ENCODE measurements at regions of chrX and their contacts with region 1.

Region 1: GRCh38 chrX:5113128-5113527 is 1115.5 kb downstream of the NLGN4X start:
- DNase-seq: peak in 1 of 2 experiments; percentile 54
- H3K4me3 ChIP-seq: no peak overlapping the region
- H3K27ac ChIP-seq: no peak overlapping the region
- H3K4me1 ChIP-seq: no peaks in the 10 kb centered on the region
- H3K27me3 ChIP-seq: no peaks in the 10 kb centered on the region
- CTCF ChIP-seq: peak; percentile 79

Region 2: DNA sequence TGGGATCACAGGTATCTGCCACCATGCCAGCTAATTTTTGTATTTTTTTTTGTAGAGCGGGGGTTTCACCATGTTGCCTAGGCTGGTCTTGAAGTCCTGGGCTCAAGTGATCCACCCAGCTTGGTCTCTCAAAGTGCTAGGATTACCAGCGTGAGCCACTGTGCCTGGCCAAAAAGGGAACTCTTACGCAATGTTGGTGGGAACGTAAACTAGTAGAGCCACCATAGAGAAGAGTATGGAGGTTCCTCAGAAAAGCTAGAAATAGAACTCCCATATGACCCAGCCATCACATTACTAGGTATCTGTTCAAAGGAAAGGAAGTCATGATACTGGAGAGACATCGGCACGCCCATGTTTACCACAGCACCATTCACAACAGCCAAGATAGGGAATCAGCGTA is 1485.5 kb before region 1 on chrX:
- CTCF ChIA-PET with region 1: no interaction called
- POLR2A ChIA-PET with region 1: no interaction called
- intact Hi-C with region 1: no loop called
- DNase-seq: no peak
- H3K4me3 ChIP-seq: no peak overlapping the region
- H3K27ac ChIP-seq: no peak overlapping the region
- H3K4me1 ChIP-seq: no peaks in the 10 kb centered on the region
- H3K27me3 ChIP-seq: no peaks in the 10 kb centered on the region
- CTCF ChIP-seq: no peak

Region 3: DNA sequence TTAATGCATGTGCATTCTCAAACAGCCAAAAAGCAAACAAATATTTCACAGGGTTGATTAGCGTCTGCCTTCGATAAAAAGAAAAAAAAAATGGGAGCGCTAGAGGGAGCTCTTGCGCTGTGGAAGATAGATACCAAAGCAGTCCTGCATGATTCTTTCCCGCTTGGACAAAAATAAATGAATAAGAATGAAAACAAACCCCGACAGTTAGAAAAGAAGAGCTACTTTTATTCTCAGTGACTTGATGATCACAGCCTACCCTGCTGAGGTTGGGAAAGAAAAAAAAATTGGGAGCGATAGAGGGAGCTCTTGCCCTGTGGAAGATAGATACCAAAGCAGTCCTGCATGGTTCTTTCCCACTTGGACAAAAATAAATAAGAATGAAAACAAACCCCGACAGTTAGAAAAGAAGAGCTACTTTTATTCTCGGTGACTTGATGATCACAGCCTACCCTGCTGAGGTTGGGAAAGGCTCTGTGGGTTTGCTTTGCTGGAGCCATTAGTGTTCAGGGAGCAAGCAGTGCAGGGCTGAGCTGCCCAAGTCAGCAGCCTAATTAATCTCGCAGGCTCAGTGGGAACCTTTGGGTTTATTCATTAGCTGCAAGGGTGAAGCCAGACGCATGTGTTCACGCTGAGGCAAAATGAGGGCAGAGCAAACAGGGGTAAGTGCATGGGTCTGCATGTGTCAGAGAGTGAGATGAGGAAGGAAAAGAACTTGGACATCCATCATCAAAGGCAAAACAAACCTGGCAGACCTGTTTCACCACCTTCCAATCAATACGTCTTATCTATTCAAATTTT is 1150.4 kb before region 1 on chrX:
- CTCF ChIA-PET with region 1: no interaction called
- POLR2A ChIA-PET with region 1: no interaction called
- intact Hi-C with region 1: loop called (anchors 5 kb)
- DNase-seq: peak; percentile 5 to 36
- H3K4me3 ChIP-seq: peak overlapping the region; percentile 21; the same call in 1 of the 2 replicates
- H3K27ac ChIP-seq: no peak overlapping the region
- H3K4me1 ChIP-seq: peaks cover 12% of the 10 kb centered on the region
- H3K27me3 ChIP-seq: no peaks in the 10 kb centered on the region
- CTCF ChIP-seq: peak; percentile 86

Region 4: GRCh38 chrX:4268676-4269075 is 844.5 kb before region 1 on chrX:
- CTCF ChIA-PET with region 1: no interaction called
- POLR2A ChIA-PET with region 1: no interaction called
- intact Hi-C with region 1: loop called (anchors 2 kb)
- DNase-seq: no peak
- H3K4me3 ChIP-seq: no peak overlapping the region
- H3K27ac ChIP-seq: no peak overlapping the region
- H3K4me1 ChIP-seq: no peaks in the 10 kb centered on the region
- H3K27me3 ChIP-seq: no peaks in the 10 kb centered on the region
- CTCF ChIP-seq: peak; percentile 59

Region 5: DNA sequence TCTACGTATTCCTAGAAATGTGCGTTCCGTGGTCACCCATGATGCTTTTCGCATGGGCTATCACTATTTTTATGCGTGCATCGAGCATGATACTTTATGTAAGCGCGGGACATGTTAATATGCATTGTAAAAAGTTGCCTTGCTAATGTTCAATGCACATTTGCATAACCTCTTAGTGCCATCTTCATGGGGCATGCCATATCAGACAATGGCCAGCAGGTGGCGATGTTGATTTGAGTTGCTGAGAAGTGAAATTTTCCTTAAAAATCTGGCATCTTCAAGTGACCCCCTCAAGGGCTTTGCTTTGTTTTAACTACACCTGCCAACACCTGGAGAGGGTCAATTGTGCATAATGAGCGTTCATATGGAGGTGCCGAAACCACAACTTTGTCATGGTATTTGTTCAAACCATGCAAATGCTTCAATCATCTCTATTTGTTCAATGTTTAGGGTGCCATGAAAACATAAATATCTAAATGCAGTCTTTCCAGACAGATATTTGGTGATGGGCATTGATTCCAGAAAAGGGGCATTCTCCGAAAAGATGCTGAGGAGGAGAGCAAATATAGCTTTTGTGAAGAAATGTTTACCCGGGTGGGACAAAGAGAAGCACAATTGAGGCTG is 565.8 kb before region 1 on chrX:
- CTCF ChIA-PET with region 1: no interaction called
- POLR2A ChIA-PET with region 1: no interaction called
- intact Hi-C with region 1: loop called (anchors 2 kb)
- DNase-seq: peak in 1 of 2 experiments; percentile 35
- H3K4me3 ChIP-seq: no peak overlapping the region
- H3K27ac ChIP-seq: no peak overlapping the region
- H3K4me1 ChIP-seq: no peaks in the 10 kb centered on the region; the same call in 1 of the 2 replicates
- H3K27me3 ChIP-seq: no peaks in the 10 kb centered on the region
- CTCF ChIP-seq: peak; percentile 95

Region 6: GRCh38 chrX:4787987-4788386 is 325.1 kb before region 1 on chrX:
- CTCF ChIA-PET with region 1: no interaction called
- POLR2A ChIA-PET with region 1: no interaction called
- intact Hi-C with region 1: loop called (anchors 5 kb)
- DNase-seq: no peak
- H3K4me3 ChIP-seq: no peak overlapping the region
- H3K27ac ChIP-seq: no peak overlapping the region
- H3K4me1 ChIP-seq: no peaks in the 10 kb centered on the region
- H3K27me3 ChIP-seq: no peaks in the 10 kb centered on the region
- CTCF ChIP-seq: peak; percentile 40; the same call in 1 of the 2 replicates

Measured in PC-9 (cell line).